Psoas muscle (tissue), 8 donors: ENCODE measurements at regions of chr11 and their contacts with region 1.

Region 1: GRCh38 chr11:36417154-36417553 is 92.9 kb downstream of the TRAF6 start:
- DNase-seq: no peak
- ATAC-seq: no peak
- H3K4me3 ChIP-seq: no peak overlapping the region
- H3K27ac ChIP-seq: no peak overlapping the region
- H3K4me1 ChIP-seq: no peaks in the 10 kb centered on the region
- H3K27me3 ChIP-seq: no peaks in the 10 kb centered on the region
- CTCF ChIP-seq: no peak

Region 2: DNA sequence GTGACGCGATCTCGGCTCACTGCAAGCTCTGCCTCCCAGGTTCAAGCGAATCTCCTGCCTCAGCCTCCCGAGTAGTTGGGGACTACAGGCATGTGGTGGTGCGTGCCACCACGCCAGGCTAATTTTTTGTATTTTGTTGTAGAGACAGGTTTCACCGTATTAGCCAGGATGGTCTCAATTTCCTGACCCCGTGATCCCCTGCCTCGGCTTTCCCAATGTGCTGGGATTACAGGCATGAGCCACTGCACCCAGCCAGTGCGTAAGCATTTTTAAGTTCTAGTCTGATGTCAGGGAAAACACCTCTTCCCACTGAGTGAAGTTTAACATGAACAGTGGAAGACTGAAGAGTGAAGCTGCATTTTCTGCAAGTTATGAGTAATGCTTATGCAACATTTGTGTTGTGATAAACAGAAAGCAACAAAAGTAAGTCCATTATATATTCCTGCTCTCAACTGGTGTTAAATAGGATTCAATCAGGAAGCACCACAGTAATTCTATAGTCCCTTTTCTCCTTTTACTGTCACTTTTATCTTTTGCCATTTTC is 1400.6 kb after region 1 on chr11:
- intact Hi-C with region 1: loop called in 1 of 2 experiments (anchors 5 kb)
- DNase-seq: no peak
- ATAC-seq: no peak
- H3K4me3 ChIP-seq: no peak overlapping the region
- H3K27ac ChIP-seq: no peak overlapping the region
- H3K4me1 ChIP-seq: no peaks in the 10 kb centered on the region
- H3K27me3 ChIP-seq: no peaks in the 10 kb centered on the region
- CTCF ChIP-seq: no peak